Panc1 (cell line): ENCODE measurements at regions of chr18 and their contacts with region 1.

Region 1: DNA sequence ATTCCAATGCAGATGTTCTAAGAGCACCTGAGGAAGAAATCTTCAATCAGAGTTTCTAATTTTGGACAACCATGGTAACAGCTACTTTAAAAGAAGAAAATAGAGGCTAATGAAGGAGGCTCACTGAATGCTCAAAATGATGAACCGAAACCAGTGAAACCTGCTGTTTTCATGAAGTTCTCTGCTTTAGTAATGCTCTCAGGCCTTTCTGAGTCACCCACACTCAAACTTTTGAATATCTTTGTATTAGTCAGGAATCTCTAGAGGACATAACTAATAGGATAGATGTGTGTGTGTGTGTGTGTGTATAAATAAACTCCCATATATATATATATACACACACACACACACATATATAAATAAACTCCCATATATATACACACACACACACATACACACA is 76.9 kb upstream of the RIT2 start:
- DNase-seq: no peak
- ATAC-seq: no peak
- H3K4me3 ChIP-seq: no peak overlapping the region
- H3K27ac ChIP-seq: no peak overlapping the region
- H3K4me1 ChIP-seq: no peaks in the 10 kb centered on the region
- H3K27me3 ChIP-seq: no peaks in the 10 kb centered on the region
- CTCF ChIP-seq: no peak

Region 2: DNA sequence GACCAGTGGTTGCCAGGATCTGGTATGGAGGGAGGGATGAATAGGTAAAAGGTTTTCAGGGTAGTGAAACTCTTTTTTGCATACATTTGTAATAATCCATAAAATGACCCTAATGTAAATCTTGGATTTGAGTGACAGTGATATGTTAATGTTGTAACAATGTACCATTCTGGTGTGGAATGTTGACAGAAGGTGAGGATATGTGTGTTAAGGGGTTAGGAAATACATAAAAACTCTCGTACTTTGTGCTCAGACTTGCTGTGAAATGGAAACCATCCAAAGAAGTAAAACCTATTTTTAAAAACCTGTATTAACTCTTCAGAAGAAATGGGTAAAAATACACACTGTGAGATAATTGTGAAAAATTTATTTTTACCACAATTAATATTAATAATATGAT is 18.7 kb after region 1 on chr18:
- CTCF ChIA-PET with region 1: no interaction called
- POLR2A ChIA-PET with region 1: interaction called, 13 read pairs
- in situ Hi-C with region 1: no loop called
- intact Hi-C with region 1: no loop called
- DNase-seq: no peak
- ATAC-seq: no peak
- H3K4me3 ChIP-seq: no peak overlapping the region
- H3K27ac ChIP-seq: no peak overlapping the region
- H3K4me1 ChIP-seq: no peaks in the 10 kb centered on the region
- H3K27me3 ChIP-seq: no peaks in the 10 kb centered on the region
- CTCF ChIP-seq: no peak

Region 3: GRCh38 chr18:43780782-43781340 is 588.5 kb after region 1 on chr18:
- CTCF ChIA-PET with region 1: no interaction called
- POLR2A ChIA-PET with region 1: no interaction called
- in situ Hi-C with region 1: no loop called
- intact Hi-C with region 1: no loop called
- DNase-seq: no peak
- ATAC-seq: no peak
- H3K4me3 ChIP-seq: no peak overlapping the region
- H3K27ac ChIP-seq: no peak overlapping the region
- H3K4me1 ChIP-seq: no peaks in the 10 kb centered on the region
- H3K27me3 ChIP-seq: no peaks in the 10 kb centered on the region
- CTCF ChIP-seq: no peak